ENCODE measurements at regions of chr1 and their contacts with region 1.

Region 1: GRCh38 chr1:64744492-64745180 is at the start of gene RAVER2:
- DNase-seq: peak; percentile 56
- H3K4me3 ChIP-seq: peak within 1 kb of the TSS; percentile 61 to 89 (median 71)
- H3K27ac ChIP-seq: peak within 1 kb of the TSS; percentile 26
- H3K4me1 ChIP-seq: peaks cover 6% of the 10 kb centered on the region
- H3K27me3 ChIP-seq: no peaks in the 10 kb centered on the region
- CTCF ChIP-seq: peak; percentile 40 to 54
- POLR2A ChIP-seq: peak; percentile 37
- total RNA-seq, gene RAVER2: 10.3 and 13.9 TPM in 2 replicates

Region 2: GRCh38 chr1:64268653-64269557 is 475.7 kb before region 1 on chr1:
- CTCF ChIA-PET with region 1: no interaction called
- POLR2A ChIA-PET with region 1: no interaction called
- dilution Hi-C with region 1: no loop called
- intact Hi-C with region 1: loop called (anchors 5 kb)
- DNase-seq: peak; percentile 76
- H3K4me3 ChIP-seq: no peak overlapping the region
- H3K27ac ChIP-seq: no peak overlapping the region
- H3K4me1 ChIP-seq: peaks cover under 1% of the 10 kb centered on the region
- H3K27me3 ChIP-seq: peaks cover 0 to 5% of the 10 kb centered on the region in 2 experiments
- CTCF ChIP-seq: peak; percentile 49 to 58
- POLR2A ChIP-seq: no peak

Region 3: GRCh38 chr1:64686828-64687724 is 57.6 kb before region 1 on chr1:
- CTCF ChIA-PET with region 1: interaction called, 5 read pairs
- POLR2A ChIA-PET with region 1: no interaction called
- dilution Hi-C with region 1: no loop called
- intact Hi-C with region 1: loop called (anchors 1 kb)
- DNase-seq: peak; percentile 88
- H3K4me3 ChIP-seq: peak overlapping the region in 1 of 3 experiments; percentile 22
- H3K27ac ChIP-seq: peak overlapping the region; percentile 95
- H3K4me1 ChIP-seq: peaks cover 31% of the 10 kb centered on the region
- H3K27me3 ChIP-seq: no peaks in the 10 kb centered on the region
- CTCF ChIP-seq: peak; percentile 67 to 73
- POLR2A ChIP-seq: no peak

Region 4: DNA sequence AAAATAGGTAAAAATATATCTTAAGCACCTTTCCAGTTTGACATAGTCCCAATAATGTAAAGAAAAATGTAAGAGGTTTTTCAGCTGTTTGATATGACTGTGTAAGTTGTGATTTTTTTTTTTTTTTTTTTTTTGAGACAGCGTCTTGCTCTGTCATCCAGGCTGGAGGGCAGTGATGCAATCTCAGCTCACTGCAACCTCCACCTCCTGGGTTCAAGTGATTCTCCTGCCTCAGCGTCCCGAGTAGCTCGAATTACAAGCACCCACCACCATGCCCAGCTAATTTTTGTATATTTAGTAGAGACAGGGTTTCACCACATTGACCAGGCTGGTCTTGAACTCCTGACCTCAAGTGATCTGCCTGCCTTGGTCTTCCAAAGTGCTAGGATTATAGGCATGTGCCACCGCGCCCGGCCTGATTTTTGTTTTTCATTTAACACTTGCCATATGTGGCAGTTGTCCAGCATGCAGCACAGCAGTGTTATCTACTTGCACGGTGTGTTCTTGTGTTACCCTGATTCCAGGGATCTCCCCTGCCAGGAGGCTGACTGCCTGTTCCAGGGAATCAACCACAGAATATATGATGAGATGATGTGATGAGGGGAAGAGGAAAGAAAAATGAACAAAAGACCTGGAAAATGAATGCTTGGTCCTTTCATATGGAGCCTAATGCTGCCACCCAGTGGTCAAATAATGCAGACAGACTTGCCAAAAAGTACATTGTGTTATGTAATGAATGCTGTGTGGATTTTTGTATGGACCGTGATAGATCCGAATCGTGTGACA is 79.2 kb after region 1 on chr1:
- CTCF ChIA-PET with region 1: interaction called, 8 read pairs
- POLR2A ChIA-PET with region 1: no interaction called
- dilution Hi-C with region 1: no loop called
- intact Hi-C with region 1: loop called (anchors 1 kb)
- DNase-seq: peak; percentile 81
- H3K4me3 ChIP-seq: no peak overlapping the region
- H3K27ac ChIP-seq: no peak overlapping the region
- H3K4me1 ChIP-seq: peaks cover 2% of the 10 kb centered on the region
- H3K27me3 ChIP-seq: no peaks in the 10 kb centered on the region
- CTCF ChIP-seq: peak; percentile 61 to 69
- POLR2A ChIP-seq: no peak

Region 5: GRCh38 chr1:65067491-65068201 is 323.0 kb after region 1 on chr1:
- CTCF ChIA-PET with region 1: no interaction called
- POLR2A ChIA-PET with region 1: no interaction called
- dilution Hi-C with region 1: no loop called
- intact Hi-C with region 1: loop called (anchors 5 kb)
- DNase-seq: peak; percentile 84
- H3K4me3 ChIP-seq: peak overlapping the region; percentile 48 to 88 (median 85)
- H3K27ac ChIP-seq: peak overlapping the region; percentile 82
- H3K4me1 ChIP-seq: peaks cover 14% of the 10 kb centered on the region
- H3K27me3 ChIP-seq: no peaks in the 10 kb centered on the region
- CTCF ChIP-seq: no peak
- POLR2A ChIP-seq: no peak

Region 6: DNA sequence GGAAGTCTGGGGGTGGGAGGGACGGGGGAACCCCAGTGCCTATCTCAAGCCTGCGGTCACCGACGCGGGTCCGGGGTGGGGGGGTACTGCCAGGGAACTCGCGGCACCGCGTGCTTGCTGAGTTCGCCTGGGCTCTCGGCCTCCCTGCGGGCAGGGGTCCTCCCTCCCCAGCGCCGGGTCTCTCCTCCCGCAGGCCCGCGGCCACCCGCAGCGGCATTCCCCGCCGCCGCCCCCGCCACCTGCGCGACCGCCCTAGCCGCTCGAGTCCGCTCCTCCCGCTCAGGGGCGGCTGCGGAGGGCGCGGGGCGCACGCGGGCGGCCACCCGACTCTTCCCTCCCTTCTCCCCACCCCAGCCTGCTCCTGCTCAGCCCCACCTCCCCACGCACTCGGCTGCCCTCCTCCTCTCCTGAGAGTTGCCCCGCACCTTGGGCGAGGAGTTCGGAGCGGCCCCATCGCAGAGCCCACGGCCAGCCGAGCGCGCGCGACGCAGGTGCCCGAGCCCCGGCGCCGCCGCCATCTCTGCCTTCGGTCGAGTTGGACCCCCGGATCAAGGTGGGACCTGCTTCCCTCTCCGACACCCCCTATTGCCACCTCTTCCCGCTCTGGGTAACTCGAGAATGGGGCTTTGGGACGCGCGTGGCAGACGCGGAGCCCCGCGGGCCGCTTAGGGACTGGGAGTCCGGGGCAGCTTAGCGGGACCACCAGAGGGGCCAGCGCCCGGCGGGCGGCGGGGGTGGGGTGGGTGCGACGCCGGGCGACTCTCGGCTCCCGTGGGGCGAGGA is 780.8 kb after region 1 on chr1:
- CTCF ChIA-PET with region 1: no interaction called
- POLR2A ChIA-PET with region 1: no interaction called
- dilution Hi-C with region 1: no loop called
- intact Hi-C with region 1: no loop called
- DNase-seq: no peak
- H3K4me3 ChIP-seq: peak overlapping the region; percentile 34 to 84 (median 38)
- H3K27ac ChIP-seq: no peak overlapping the region
- H3K4me1 ChIP-seq: peaks cover 27% of the 10 kb centered on the region
- H3K27me3 ChIP-seq: no peaks in the 10 kb centered on the region
- CTCF ChIP-seq: no peak
- POLR2A ChIP-seq: no peak

Measured in endothelial cell of umbilical vein (primary cell).